ENCODE measurements at regions of chr19 and their contacts with region 1.

Region 1: DNA sequence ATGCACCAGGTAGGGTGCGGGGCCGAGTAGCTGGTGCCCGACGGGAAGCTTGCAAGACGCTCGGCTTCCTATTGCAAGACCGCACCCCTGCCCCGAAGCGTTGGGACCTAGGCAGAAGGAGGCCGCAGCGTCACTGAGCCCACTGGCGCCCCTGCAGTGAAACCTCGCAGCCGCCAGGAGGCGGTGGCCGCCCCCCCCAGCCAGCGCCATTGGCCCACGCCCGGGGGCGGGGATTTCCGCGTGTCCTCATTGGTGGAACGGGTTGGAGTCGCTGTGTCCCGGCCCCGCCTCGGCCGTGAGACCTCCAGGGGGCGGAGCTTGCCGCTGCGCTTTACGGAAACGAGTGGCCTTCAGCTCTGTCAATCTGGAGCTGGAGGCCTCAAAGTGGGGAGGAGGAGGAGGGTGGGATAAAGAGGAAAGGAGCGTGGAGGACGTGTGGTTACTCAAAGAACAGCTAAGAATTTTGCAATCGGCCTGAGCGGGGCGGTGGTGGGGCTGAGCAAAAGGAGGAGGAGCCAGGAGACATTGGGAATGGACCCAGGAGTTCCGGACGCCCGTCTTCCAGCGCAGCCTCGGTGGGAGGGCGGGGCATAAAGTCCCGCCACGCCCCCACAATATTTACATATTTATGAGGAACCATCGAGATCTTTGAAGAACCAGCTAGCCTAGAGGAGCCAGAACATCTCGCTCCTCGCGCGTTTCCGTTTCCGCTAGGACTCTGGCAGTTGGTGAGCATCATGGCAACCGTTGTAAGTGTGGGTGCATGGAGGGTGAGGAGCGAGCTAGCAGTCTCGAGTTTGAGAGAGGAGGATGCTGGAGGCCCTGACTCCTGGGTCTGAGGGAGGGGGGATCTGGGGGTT is at the starts of genes GYS1 and RUVBL2:
- DNase-seq: peak; percentile 98 to 99 (median 99)
- H3K4me3 ChIP-seq: peak within 1 kb of the TSS; percentile 87
- H3K4me3 Mint-ChIP-seq: peak within 1 kb of the TSS; percentile 88 to 97 (median 96)
- H3K27ac ChIP-seq: peak within 1 kb of the TSS; percentile 85
- H3K27ac Mint-ChIP-seq: peak within 1 kb of the TSS; percentile 88 to 100 (median 98)
- H3K4me1 ChIP-seq: peaks cover 27% of the 10 kb centered on the region
- H3K4me1 Mint-ChIP-seq: peaks cover 28 to 54% (median 41%) of the 10 kb centered on the region in 3 donors
- H3K27me3 ChIP-seq: no peaks in the 10 kb centered on the region
- H3K27me3 Mint-ChIP-seq: peaks cover 0 to 2% of the 10 kb centered on the region in 2 donors
- total RNA-seq, gene GYS1: 38.2 to 38.9 TPM
- total RNA-seq, gene RUVBL2: 147 to 159 TPM

Region 2: GRCh38 chr19:48872182-48872883 is 121.1 kb before region 1 on chr19 and contains the start of gene PPP1R15A:
- CTCF ChIA-PET with region 1: interaction called, 6 read pairs
- POLR2A ChIA-PET with region 1: interaction called, 12 read pairs
- DNase-seq: peak; percentile 92 to 99 (median 98)
- H3K4me3 ChIP-seq: peak within 1 kb of the TSS; percentile 95
- H3K4me3 Mint-ChIP-seq: peak within 1 kb of the TSS; percentile 97 to 100 (median 99)
- H3K27ac ChIP-seq: peak within 1 kb of the TSS; percentile 100
- H3K27ac Mint-ChIP-seq: peak within 1 kb of the TSS; percentile 99 to 100 (median 100)
- H3K4me1 ChIP-seq: peaks cover 32% of the 10 kb centered on the region
- H3K4me1 Mint-ChIP-seq: peaks cover 39 to 45% (median 43%) of the 10 kb centered on the region in 3 donors
- H3K27me3 ChIP-seq: no peaks in the 10 kb centered on the region
- H3K27me3 Mint-ChIP-seq: peaks cover 4 to 14% of the 10 kb centered on the region in 2 donors
- total RNA-seq, gene PPP1R15A: 67.1 to 69.3 TPM

Region 3: GRCh38 chr19:48970923-48971395 is 22.4 kb before region 1 on chr19:
- CTCF ChIA-PET with region 1: interaction called, 25 read pairs
- POLR2A ChIA-PET with region 1: interaction called, 18 read pairs
- DNase-seq: peak; percentile 59 to 84 (median 72)
- H3K4me3 ChIP-seq: no peak overlapping the region
- H3K4me3 Mint-ChIP-seq: no peak overlapping the region
- H3K27ac ChIP-seq: no peak overlapping the region
- H3K27ac Mint-ChIP-seq: peak overlapping the region in 4 of 8 donors; percentile 13 to 56 (median 21)
- H3K4me1 ChIP-seq: peaks cover 12% of the 10 kb centered on the region
- H3K4me1 Mint-ChIP-seq: peaks cover 16 to 29% (median 23%) of the 10 kb centered on the region in 3 donors
- H3K27me3 ChIP-seq: no peaks in the 10 kb centered on the region
- H3K27me3 Mint-ChIP-seq: peaks cover 0 to 1% of the 10 kb centered on the region in 2 donors

Region 4: GRCh38 chr19:48982280-48982679 is 11.1 kb before region 1 on chr19:
- CTCF ChIA-PET with region 1: interaction called, 25 read pairs
- POLR2A ChIA-PET with region 1: interaction called, 3 read pairs
- DNase-seq: no peak
- H3K4me3 ChIP-seq: no peak overlapping the region
- H3K4me3 Mint-ChIP-seq: no peak overlapping the region
- H3K27ac ChIP-seq: no peak overlapping the region
- H3K27ac Mint-ChIP-seq: no peak overlapping the region
- H3K4me1 ChIP-seq: no peaks in the 10 kb centered on the region
- H3K4me1 Mint-ChIP-seq: peaks cover 0 to 2% (median 0%) of the 10 kb centered on the region in 3 donors
- H3K27me3 ChIP-seq: no peaks in the 10 kb centered on the region
- H3K27me3 Mint-ChIP-seq: no peaks in the 10 kb centered on the region

Region 5: GRCh38 chr19:49113762-49114629 is 120.6 kb after region 1 on chr19 and contains the start of gene LIN7B:
- CTCF ChIA-PET with region 1: interaction called, 10 read pairs
- POLR2A ChIA-PET with region 1: no interaction called
- DNase-seq: peak; percentile 72 to 83 (median 82)
- H3K4me3 ChIP-seq: peak within 1 kb of the TSS; percentile 62
- H3K4me3 Mint-ChIP-seq: peak within 1 kb of the TSS; percentile 82 to 91 (median 87)
- H3K27ac ChIP-seq: peak within 1 kb of the TSS; percentile 47
- H3K27ac Mint-ChIP-seq: peak within 1 kb of the TSS; percentile 60 to 93 (median 86)
- H3K4me1 ChIP-seq: peaks cover 18% of the 10 kb centered on the region
- H3K4me1 Mint-ChIP-seq: peaks cover 34 to 47% (median 41%) of the 10 kb centered on the region in 3 donors
- H3K27me3 ChIP-seq: no peaks in the 10 kb centered on the region
- H3K27me3 Mint-ChIP-seq: no peaks in the 10 kb centered on the region
- total RNA-seq, gene LIN7B: 4.0 to 5.1 TPM